Activated T-helper 1 cell treated with anti-CD3 and anti-CD28 coated beads, Interleukin-12 subunit alpha, Interleukin-12 subunit beta, Interleukin-2, Interleukin-4 antibody, amounts not matched to agents 30 ng/mL and 10 ng/mL and 1 ng/mL, durations not matched to agents 14 hours and 24 hours and 36 hours (primary cell): ENCODE measurements at regions of chr12 and their contacts with region 1.

Region 1: GRCh38 chr12:48716493-48717251 is at the start of gene CCNT1:
- DNase-seq: peak; percentile 99
- H3K4me3 Mint-ChIP-seq: peak within 1 kb of the TSS; percentile 90
- H3K27ac Mint-ChIP-seq: peak within 1 kb of the TSS; percentile 93
- H3K4me1 Mint-ChIP-seq: peaks cover 43% of the 10 kb centered on the region
- H3K27me3 Mint-ChIP-seq: no peaks in the 10 kb centered on the region
- total RNA-seq, gene CCNT1: 67.2 and 67.7 TPM in 2 replicates

Region 2: GRCh38 chr12:48197971-48198671 is 518.6 kb before region 1 on chr12:
- intact Hi-C with region 1: loop called (anchors 2 kb)
- DNase-seq: peak; percentile 90
- H3K4me3 Mint-ChIP-seq: peak overlapping the region; percentile 88
- H3K27ac Mint-ChIP-seq: peak overlapping the region; percentile 86
- H3K4me1 Mint-ChIP-seq: peaks cover 44% of the 10 kb centered on the region
- H3K27me3 Mint-ChIP-seq: peaks cover 21% of the 10 kb centered on the region

Region 3: GRCh38 chr12:48750769-48751735 is 34.4 kb after region 1 on chr12:
- intact Hi-C with region 1: loop called (anchors 1 kb)
- DNase-seq: no peak
- H3K4me3 Mint-ChIP-seq: no peak overlapping the region
- H3K27ac Mint-ChIP-seq: peak overlapping the region; percentile 14
- H3K4me1 Mint-ChIP-seq: peaks cover 15% of the 10 kb centered on the region
- H3K27me3 Mint-ChIP-seq: peaks cover 7% of the 10 kb centered on the region

Region 4: DNA sequence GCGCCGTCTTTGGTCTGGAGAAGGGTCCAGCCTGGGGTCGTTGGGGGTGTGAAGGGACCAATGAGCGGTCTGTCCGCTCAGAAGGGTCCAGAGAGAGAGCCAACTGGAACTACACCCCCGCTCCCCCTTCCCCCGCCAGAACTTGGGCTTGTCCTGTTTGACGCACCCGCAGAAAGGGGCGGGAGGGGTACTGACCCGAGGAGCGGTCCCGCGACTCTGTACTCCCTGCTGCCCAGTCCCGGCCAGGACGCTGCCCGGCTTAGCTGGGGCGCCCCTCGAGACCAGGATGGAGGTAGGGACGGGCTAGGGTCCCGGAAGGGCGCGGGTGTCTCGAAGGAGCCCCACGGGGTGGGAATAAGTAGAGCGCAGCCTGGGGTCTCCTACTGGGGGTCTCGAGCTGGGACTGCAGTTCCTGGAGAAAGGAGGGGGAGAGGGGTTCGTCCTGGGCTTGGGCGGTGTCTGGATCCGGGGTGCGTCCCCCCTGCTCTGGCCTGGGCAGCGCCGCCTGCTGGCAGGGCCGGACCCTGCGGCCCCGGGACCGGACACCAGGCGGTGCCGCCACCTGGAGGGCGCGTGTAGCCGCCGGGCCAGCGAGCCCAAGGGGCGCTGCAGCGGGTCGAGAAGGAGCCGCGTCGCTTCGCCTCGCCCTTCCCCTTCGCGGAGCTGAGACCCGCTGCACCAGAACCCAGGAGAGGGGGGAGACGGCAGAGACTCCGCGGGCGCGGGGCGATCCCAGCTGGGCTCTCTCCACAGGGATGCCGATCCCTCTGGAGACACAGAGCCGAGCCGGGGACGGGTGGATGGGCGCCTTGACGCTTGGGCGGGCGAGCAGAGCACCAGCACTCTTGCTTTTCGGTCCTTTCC is 97.8 kb after region 1 on chr12:
- intact Hi-C with region 1: loop called (anchors 1 kb)
- DNase-seq: peak; percentile 78
- H3K4me3 Mint-ChIP-seq: peak overlapping the region; percentile 93
- H3K27ac Mint-ChIP-seq: peak overlapping the region; percentile 55
- H3K4me1 Mint-ChIP-seq: peaks cover 28% of the 10 kb centered on the region
- H3K27me3 Mint-ChIP-seq: peaks cover 8% of the 10 kb centered on the region